ENCODE measurements at regions of chr2 and their contacts with region 1.

Region 1: DNA sequence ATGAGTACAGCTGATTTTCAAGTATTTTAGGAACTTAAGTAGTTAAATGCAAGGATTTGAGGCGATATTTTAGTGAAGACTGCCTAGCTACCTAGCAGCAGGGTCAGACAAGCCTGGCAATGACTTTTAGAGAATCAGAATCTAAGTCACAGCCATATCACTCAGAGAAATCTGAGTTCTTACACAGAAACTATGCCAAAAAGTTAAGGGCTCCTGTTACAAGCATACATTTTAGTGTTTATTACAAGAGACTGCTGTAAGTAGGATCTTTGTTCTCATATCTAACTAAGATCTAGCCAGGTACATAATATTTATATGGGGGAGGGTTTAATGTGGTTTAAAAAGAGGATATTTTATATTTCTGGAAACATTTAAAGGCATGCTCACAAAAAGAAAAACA is 37.5 kb downstream of the MAP4K3 start:
- DNase-seq: no peak
- ATAC-seq: peak; percentile 15; the same call in 1 of the 3 replicates
- H3K4me3 ChIP-seq: no peak overlapping the region
- H3K27ac ChIP-seq: peak overlapping the region; percentile 6
- H3K4me1 ChIP-seq: peaks cover 78% of the 10 kb centered on the region
- H3K27me3 ChIP-seq: no peaks in the 10 kb centered on the region
- CTCF ChIP-seq: no peak
- EP300 ChIP-seq: no peak
- POLR2A ChIP-seq: no peak
- RAD21 ChIP-seq: no peak

Region 2: GRCh38 chr2:39431592-39432316 is 32.2 kb after region 1 on chr2:
- CTCF ChIA-PET with region 1: no interaction called
- POLR2A ChIA-PET with region 1: no interaction called
- in situ Hi-C with region 1: no loop called
- intact Hi-C with region 1: loop called (anchors 5 kb)
- DNase-seq: no peak
- ATAC-seq: no peak
- H3K4me3 ChIP-seq: peak overlapping the region in 2 of 3 experiments; percentile 8 to 93; a peak in 2 of 6 replicates
- H3K27ac ChIP-seq: peak overlapping the region; percentile 0
- H3K4me1 ChIP-seq: peaks cover 65% of the 10 kb centered on the region
- H3K27me3 ChIP-seq: no peaks in the 10 kb centered on the region; a peak in 1 of 5 replicates
- CTCF ChIP-seq: no peak
- EP300 ChIP-seq: no peak
- POLR2A ChIP-seq: no peak
- RAD21 ChIP-seq: no peak